ENCODE measurements at regions of chr2 and their contacts with region 1.

Region 1: DNA sequence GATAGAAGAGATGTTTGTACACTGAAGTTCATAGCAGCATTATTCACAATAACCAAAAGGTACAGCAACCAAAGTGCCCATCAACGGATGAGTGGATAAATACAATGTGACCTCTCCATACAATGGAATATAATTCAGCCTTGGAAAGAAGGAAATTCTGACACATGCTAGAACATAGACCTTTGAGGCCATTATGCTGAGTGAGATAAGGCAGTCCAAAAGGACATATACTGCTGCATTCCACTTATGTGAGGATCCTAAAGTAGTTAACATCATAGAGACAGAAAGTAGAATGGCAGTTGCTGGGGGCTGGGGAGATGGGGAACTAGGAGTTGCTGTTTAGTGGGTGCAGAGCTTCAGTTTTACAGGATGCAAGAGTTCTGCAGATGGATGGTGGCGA is 38.2 kb upstream of the GLI2 start:
- DNase-seq: no peak
- H3K4me3 ChIP-seq: no peak overlapping the region
- H3K27ac ChIP-seq: no peak overlapping the region
- H3K4me1 ChIP-seq: no peaks in the 10 kb centered on the region
- H3K27me3 ChIP-seq: no peaks in the 10 kb centered on the region
- CTCF ChIP-seq: no peak
- POLR2A ChIP-seq: no peak

Region 2: GRCh38 chr2:121073355-121074210 is 376.1 kb after region 1 on chr2:
- intact Hi-C with region 1: loop called (anchors 2 kb)
- DNase-seq: no peak
- H3K4me3 ChIP-seq: no peak overlapping the region
- H3K27ac ChIP-seq: no peak overlapping the region
- H3K4me1 ChIP-seq: peaks cover 8% of the 10 kb centered on the region
- H3K27me3 ChIP-seq: no peaks in the 10 kb centered on the region
- CTCF ChIP-seq: no peak
- POLR2A ChIP-seq: no peak